AG04449 (cell line): ENCODE measurements at regions of chr5 and their contacts with region 1.

Region 1: DNA sequence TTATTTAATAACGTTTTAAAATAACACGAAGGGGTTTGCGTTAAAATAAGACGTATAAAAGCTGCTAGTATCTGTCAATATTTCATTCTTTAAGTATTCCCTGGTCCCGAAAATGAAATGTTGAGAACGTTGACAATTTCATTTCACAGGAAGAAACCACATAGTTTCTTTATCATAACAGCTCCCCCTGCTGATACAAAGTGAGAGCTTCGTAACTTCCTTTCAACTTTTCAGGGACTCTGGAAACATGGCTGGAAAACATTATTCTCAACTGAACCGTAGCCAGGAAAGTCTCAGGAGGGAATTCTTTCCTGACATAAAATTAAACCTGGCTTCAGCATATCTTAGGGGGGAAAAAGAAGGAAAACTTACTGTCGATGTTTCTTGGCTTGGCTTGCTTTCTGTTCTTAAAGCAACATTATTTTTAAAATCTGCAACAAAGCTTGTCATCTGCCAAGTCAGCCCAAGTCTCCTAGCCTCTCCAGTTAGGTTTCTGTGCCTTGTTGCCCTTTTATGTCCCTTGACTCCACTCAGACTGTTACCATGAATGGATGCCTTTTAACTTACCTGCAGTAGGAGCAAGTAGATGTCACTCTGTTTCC is 122.9 kb upstream of the DAB2 start:
- DNase-seq: no peak
- H3K4me3 ChIP-seq: no peak overlapping the region
- CTCF ChIP-seq: peak; percentile 44

Region 2: GRCh38 chr5:39381376-39381775 is 166.3 kb before region 1 on chr5:
- CTCF ChIA-PET with region 1: interaction called, 70 read pairs
- POLR2A ChIA-PET with region 1: interaction called, 3 read pairs
- DNase-seq: no peak
- H3K4me3 ChIP-seq: no peak overlapping the region
- CTCF ChIP-seq: no peak

Region 3: DNA sequence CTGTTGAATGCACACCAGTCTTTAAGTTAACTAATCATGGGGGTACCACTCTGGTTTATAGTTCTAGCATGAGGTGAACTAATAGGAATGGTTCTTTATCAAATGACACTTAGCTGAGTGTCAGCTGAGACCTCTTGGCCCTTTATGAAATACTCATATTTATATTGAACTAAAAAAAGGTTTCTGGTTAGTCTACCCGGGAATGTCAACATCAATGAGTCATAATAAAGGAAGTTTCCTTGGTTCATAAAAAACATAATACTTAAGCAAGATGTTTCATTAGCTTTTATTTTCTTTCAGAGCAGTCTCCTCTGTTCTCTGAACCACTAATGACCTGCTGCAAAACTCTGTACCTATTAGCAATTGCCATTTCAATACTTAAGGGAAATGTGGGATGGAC is 136.6 kb before region 1 on chr5:
- CTCF ChIA-PET with region 1: interaction called, 23 read pairs
- POLR2A ChIA-PET with region 1: no interaction called
- DNase-seq: no peak
- H3K4me3 ChIP-seq: no peak overlapping the region
- CTCF ChIP-seq: no peak

Region 4: DNA sequence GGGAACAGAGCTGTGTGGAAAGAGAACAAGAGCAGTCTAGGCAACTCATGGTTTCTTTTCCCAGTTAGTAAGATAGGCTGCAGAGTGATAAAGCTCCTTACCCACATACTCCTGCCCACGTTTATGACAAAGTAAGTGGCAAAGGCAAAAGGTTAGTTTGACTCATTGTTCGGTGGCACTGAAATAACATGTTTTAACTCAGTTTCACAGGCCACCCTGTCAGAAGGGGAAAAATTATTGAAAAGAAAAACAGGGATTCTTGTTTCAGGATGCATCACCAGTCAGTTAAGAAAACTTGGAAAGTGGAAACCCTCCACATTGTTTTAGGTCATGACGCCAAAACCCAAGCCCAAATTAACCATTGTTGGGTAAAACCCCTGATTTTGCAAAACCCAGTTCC is 100.6 kb before region 1 on chr5:
- CTCF ChIA-PET with region 1: interaction called, 13 read pairs
- POLR2A ChIA-PET with region 1: no interaction called
- DNase-seq: no peak
- H3K4me3 ChIP-seq: no peak overlapping the region
- CTCF ChIP-seq: no peak

Region 5: DNA sequence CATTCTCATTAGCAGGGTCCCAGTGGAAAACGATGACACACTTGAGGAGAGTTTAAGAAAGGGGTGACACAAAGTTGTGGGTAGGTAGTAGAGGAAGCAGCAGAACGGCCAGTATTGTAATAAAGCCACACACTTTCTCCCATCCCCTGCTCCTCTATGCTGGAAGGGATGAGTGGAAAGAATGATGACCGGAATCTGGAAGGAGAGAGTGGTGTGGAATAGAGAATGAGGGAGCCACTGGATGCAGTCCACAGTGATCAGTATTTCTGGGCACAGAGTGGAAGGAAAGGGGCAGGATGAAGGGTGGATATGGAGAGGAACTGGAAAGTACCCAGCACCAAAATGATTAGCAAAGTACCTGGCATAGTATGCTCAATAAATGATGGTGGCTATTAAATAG is 10.9 kb after region 1 on chr5:
- CTCF ChIA-PET with region 1: interaction called, 20 read pairs
- POLR2A ChIA-PET with region 1: no interaction called
- DNase-seq: no peak
- H3K4me3 ChIP-seq: no peak overlapping the region
- CTCF ChIP-seq: no peak